ENCODE measurements at regions of chr7 and their contacts with region 1.

Region 1: DNA sequence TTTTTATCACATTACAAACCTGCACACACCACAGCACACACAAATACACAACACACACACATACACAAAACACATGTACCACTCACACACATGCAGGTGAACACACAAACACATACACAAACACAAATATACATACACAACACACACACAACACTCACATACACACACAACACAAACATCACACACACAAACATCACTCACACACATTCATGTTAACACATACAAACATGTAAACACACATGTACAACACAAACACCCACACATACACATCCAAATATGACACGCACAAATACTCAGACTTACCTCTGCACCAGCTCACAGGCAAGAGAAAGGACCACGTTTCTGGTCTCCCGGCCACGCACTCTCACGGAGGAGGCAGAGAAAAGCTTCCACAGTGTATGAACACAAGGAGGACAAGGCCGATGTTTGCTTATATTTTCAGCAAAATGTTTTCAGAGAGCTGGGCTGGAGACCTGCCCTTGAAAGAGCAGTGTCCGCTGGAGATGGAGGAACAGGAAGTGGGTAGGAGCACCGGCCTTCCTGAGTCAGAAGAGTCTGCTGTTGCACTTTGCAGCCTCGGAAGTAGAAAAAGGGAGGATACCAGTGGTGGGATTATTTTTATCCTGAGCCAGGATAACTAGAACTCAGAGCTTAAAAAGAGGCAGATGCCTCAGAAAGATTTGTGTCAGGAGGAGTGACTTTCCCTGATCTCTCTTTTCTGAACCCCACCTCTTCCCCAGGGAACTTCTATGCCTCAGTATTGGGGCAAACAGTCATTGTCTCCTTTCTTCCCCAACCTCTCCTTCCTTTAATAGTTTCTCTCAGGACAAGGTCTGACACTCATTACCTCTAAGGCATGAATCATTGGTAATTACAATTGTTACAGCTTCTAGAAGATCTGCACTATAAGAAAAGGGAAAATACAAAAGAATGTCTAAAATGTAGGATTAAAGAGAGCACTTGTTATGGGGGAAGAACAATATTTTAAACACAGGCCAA is at the start of gene GIMAP6:
- DNase-seq: peak; percentile 75
- ATAC-seq: no peak
- total RNA-seq, gene GIMAP6: 33.5 TPM

Region 2: GRCh38 chr7:150466477-150466876 is 165.7 kb before region 1 on chr7:
- intact Hi-C with region 1: loop called (anchors 5 kb)
- DNase-seq: no peak
- ATAC-seq: no peak

Region 3: DNA sequence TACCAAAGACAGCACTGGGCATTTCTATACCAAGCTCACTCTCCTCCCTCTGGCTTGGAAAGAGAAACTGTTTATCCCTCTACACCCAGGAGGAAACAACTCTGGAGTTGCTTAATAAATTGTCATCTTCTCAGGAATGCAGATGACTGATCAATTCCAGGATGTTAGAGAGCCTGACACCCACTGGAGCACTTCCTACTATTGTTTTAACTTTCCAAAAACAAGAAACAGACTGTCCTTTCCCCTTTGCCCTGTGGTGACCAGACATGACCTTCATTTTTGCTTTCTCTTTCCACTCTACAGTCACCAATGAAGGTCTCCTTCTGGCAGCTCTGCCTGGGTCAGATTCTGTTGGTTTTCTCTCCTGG is 45.4 kb before region 1 on chr7:
- intact Hi-C with region 1: loop called (anchors 5 kb)
- DNase-seq: no peak
- ATAC-seq: peak; percentile 81

Region 4: GRCh38 chr7:150737265-150738055 is 105.3 kb after region 1 on chr7 and contains the start of gene GIMAP5:
- intact Hi-C with region 1: loop called (anchors 5 kb)
- DNase-seq: no peak
- ATAC-seq: peak; percentile 56
- total RNA-seq, gene GIMAP5: 9.0 TPM

Measured in Right ventricle myocardium inferior (tissue), 1 donor.